Transverse colon (tissue), 4 donors: ENCODE measurements at regions of chr13 and their contacts with region 1.

Region 1: GRCh38 chr13:107234319-107235073 is 666.6 kb upstream of the ARGLU1 start:
- DNase-seq: no peak
- H3K4me3 ChIP-seq: no peak overlapping the region
- H3K27ac ChIP-seq: no peak overlapping the region
- H3K4me1 ChIP-seq: no peaks in the 10 kb centered on the region
- H3K27me3 ChIP-seq: no peaks in the 10 kb centered on the region
- CTCF ChIP-seq: no peak
- EP300 ChIP-seq: no peak
- POLR2A ChIP-seq: no peak

Region 2: DNA sequence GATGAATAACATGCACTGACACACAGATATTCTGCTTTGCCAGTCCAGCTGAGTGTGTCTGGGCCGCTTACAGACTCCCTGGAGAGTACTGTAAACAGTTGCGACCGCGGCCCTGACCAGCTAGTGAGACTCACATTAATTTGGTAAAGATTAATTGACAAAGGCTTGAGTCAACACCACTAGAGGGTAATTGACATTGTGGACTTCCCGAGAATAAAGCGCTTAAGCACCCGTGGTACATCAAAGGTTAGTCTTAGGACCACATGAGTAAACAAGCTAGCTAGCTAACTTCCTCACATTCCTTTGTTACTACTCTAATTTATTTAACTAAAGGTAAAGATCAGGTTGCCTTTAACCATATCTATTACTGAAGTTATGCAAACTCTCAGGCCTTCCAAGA is 42.2 kb before region 1 on chr13:
- in situ Hi-C with region 1: no loop called
- intact Hi-C with region 1: loop called (anchors 2 kb)
- DNase-seq: no peak
- H3K4me3 ChIP-seq: no peak overlapping the region
- H3K27ac ChIP-seq: no peak overlapping the region
- H3K4me1 ChIP-seq: no peaks in the 10 kb centered on the region
- H3K27me3 ChIP-seq: no peaks in the 10 kb centered on the region
- CTCF ChIP-seq: no peak
- EP300 ChIP-seq: no peak
- POLR2A ChIP-seq: no peak

Region 3: DNA sequence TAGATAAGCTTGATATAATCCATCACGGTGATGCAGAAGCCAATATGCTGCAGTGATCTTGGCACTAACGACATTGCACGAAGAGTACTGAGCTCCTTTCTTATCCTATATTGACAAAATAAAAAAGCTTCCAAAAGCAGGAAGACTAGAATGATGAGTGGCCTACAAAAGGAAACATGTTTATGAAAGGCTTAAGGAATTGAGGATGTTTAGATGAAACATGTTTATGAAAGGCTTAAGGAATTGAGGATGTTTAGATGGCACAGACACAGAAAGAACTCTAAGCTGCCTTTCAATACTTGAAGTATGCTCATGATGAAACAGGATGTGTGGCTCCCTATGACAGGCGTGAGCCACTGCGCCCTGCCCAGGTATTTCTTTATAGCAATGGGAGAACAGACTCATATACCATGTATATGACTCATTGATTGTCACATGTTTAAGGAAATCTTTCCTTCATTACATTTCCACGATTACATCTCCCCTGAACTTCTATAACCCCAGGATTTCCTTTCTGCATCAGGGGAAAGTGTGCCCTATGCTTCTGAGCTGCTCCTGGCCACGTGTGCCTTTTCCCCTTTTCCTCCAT is 24.2 kb after region 1 on chr13:
- in situ Hi-C with region 1: no loop called
- intact Hi-C with region 1: no loop called
- DNase-seq: no peak
- H3K4me3 ChIP-seq: no peak overlapping the region
- H3K27ac ChIP-seq: no peak overlapping the region
- H3K4me1 ChIP-seq: no peaks in the 10 kb centered on the region
- H3K27me3 ChIP-seq: no peaks in the 10 kb centered on the region
- CTCF ChIP-seq: no peak
- EP300 ChIP-seq: no peak
- POLR2A ChIP-seq: no peak